Activated naive CD4-positive, alpha-beta T cell treated with anti-CD3 and anti-CD28 coated beads for 36 hours (primary cell): ENCODE measurements at regions of chr12 and their contacts with region 1.

Region 1: GRCh38 chr12:66345212-66345611 is 42.9 kb downstream of the HELB start:
- DNase-seq: no peak
- H3K4me3 Mint-ChIP-seq: no peak overlapping the region
- H3K27ac Mint-ChIP-seq: peak overlapping the region; percentile 4
- H3K4me1 Mint-ChIP-seq: peaks cover 31% of the 10 kb centered on the region
- H3K27me3 Mint-ChIP-seq: no peaks in the 10 kb centered on the region

Region 2: DNA sequence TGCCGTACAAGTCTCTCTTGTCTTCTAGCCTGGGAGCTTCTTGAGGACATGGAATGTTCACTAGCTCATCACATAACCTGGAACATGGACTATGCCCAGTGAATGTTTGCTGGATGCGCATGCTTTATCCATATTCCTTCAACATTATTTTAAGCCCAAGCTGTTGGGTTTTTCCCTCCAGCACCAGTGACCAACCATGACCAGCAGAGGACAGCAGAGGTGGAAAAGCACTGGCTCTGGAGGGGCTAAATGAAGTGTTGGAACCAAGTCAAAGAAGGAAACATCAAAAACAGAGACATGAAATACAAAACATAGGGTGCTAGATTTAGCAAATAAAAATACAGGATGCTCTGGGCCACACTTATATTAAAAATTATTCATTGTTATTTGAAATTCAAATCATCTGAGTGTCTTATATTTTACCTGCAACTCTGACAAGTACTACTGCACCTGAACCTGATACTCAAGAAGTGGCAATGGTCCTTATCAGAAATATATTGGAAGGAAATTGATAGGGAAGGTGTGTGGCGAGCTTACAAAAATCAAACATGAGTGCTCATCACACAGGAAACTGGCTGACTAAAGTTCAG is 66.0 kb before region 1 on chr12:
- CTCF ChIA-PET with region 1: interaction called, 4 read pairs
- intact Hi-C with region 1: loop called (anchors 5 kb)
- DNase-seq: peak; percentile 62
- H3K4me3 Mint-ChIP-seq: no peak overlapping the region
- H3K27ac Mint-ChIP-seq: no peak overlapping the region
- H3K4me1 Mint-ChIP-seq: peaks cover 40% of the 10 kb centered on the region
- H3K27me3 Mint-ChIP-seq: no peaks in the 10 kb centered on the region